Heart left ventricle (tissue), 16 donors: ENCODE measurements at regions of chr16 and their contacts with region 1.

Region 1: DNA sequence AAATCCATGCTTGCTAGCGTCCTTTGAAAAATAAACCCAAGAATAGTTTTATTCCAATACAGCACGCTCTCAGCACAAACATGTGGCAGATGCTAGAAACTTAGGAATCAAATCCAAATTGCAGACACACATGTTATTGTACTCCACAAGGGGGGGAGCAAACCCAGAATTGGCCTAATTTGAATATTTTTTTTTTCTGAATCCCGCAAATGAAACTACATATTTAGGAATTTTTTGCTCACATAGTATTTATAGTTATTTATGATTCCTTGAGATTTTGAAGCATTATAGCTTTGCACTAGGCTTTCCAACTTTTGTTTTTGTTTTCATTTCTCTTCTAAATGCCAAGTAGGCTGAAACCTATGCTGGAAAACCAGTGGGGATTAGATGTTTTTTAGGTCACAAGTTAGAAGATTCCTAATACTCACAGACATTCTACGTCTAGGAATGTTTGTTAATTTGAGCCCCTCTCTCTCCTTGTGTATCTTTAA is 59.3 kb upstream of the CDH11 start:
- DNase-seq: no peak
- ATAC-seq: no peak
- H3K4me3 ChIP-seq: no peak overlapping the region
- H3K27ac ChIP-seq: no peak overlapping the region
- H3K4me1 ChIP-seq: peaks cover 0 to 17% (median 0%) of the 10 kb centered on the region in 12 donors
- H3K27me3 ChIP-seq: no peaks in the 10 kb centered on the region
- CTCF ChIP-seq: peak in 1 of 12 donors; percentile 20
- POLR2A ChIP-seq: no peak

Region 2: GRCh38 chr16:65315081-65315780 is 134.1 kb after region 1 on chr16:
- intact Hi-C with region 1: loop called in 1 of 10 experiments (anchors 10 kb)
- DNase-seq: peak; percentile 65 to 73 (median 70)
- ATAC-seq: peak in 3 of 4 donors; percentile 78 to 85 (median 85)
- H3K4me3 ChIP-seq: no peak overlapping the region
- H3K27ac ChIP-seq: peak overlapping the region in 2 of 12 donors; percentile 6 to 22
- H3K4me1 ChIP-seq: peaks cover 0 to 21% (median 0%) of the 10 kb centered on the region in 12 donors
- H3K27me3 ChIP-seq: no peaks in the 10 kb centered on the region
- CTCF ChIP-seq: no peak
- POLR2A ChIP-seq: no peak